ENCODE measurements at regions of chr17 and their contacts with region 1.

Region 1: DNA sequence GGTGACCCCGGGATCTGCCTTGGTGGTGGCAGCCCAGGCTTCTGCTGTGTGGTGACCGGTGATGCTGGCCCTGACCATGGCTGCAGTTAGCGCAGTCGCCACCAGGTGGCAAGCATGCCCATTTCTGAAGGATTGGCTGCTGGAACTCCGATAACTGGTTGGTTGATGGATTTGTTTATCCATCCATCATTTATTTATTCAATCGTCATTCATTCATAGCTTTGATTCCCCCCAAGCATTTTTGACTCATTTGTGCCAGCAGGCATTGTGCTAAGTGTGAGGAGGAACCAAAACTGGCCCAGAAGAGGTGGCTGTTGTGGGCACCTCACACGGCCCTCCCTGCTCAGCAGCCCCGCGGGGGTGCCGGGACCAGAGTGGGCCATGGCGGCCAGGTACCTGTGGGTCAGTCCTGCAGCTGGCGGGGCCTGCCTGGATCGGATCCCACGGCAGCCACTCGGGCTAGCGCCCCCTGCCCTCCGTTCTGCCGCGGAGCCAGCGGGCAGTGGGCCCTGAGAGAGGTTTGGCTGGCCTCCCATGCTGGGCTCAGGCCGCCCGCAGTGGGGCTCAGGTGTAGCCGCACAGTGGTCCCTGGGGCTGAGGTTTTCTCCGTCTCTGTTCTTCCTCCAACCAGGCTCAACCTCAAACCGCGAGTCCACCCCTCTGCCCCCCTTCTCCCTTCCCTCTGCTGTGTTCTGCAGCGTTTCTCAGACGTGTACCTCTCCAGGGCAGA is 28.8 kb upstream of the ITGA3 start:
- DNase-seq: peak; percentile 95

Region 2: DNA sequence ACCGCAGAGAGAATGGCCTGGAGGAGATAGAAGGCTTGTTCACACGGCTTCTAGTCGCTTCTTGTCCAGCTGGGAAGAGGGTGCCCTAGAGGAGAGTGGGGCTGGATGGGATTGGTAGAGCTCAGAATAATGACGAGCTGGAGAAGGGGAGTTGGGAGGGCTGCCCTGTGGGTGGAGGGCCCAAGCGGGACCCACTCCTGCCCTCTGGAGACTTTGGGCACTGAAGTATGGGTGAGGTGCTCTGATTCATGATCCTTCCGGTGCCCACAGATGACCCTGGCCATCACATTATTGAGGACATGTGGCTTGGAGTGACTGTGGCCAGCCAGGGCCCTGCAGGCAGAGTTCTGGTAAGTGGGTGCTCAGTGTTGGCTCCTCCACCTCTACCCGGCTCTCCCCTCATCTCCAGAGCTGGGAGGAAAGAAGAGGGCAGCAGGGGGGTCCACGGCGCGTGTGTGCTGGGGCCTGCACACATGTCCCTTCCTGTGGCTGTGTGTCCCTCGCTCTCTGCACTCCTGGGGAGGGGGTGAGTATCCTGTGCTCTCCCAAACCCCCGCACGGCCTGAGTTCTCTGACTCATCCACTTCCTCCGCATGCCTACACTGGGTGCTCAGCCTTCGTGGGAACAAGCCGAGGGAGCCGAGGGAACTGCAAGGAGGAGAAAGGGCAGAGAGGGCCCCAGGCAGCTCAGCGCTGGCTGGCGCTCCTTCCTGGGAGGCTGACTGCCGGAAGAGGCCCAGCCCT is 37.4 kb after region 1 on chr17:
- intact Hi-C with region 1: loop called in 1 of 2 experiments (anchors 5 kb)
- DNase-seq: no peak

Region 3: DNA sequence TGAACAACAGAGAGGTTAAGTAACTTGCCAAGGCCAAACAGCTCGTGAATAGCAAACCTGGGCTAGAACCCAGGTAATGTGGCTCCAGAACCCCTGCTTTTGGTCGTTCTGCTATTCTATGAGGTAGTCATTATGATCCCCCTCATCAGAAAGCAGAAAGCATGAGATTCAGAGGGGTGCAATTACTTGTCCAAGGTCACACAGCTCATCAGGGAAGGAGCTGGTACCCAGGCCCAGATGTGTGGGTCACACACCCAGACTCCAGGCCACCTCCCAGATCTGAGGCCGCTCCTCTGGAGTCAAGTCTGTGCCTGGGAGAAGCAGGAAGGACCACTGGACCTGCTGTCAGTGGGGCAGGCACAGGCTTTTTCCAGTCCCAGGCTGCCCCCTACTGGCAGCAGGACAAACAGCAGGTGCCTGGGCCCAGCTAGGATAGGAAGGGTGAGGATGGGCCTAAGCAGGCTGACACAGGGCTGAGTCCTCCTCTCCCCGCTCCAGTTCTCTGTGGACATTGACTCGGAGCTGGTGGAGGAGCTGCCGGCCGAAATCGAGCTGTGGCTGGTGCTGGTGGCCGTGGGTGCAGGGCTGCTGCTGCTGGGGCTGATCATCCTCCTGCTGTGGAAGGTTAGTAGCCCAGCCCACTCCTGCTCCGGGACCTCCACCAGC is 60.3 kb after region 1 on chr17:
- intact Hi-C with region 1: loop called in 1 of 2 experiments (anchors 5 kb)
- DNase-seq: peak; percentile 90

Region 4: GRCh38 chr17:50094753-50095619 is 67.9 kb after region 1 on chr17 and contains the start of gene PDK2:
- intact Hi-C with region 1: loop called in 1 of 2 experiments (anchors 2 kb)
- DNase-seq: peak; percentile 99
- total RNA-seq, gene PDK2: 26.0 to 27.7 TPM